ENCODE measurements at regions of chr16 and their contacts with region 1.

Region 1: GRCh38 chr16:9151597-9151996 is 60.2 kb downstream of the HAPSTR1 start:
- DNase-seq: no peak
- ATAC-seq: no peak
- H3K4me3 ChIP-seq: no peak overlapping the region
- H3K27ac ChIP-seq: no peak overlapping the region
- H3K4me1 ChIP-seq: no peaks in the 10 kb centered on the region
- H3K27me3 ChIP-seq: no peaks in the 10 kb centered on the region
- CTCF ChIP-seq: no peak
- EP300 ChIP-seq: no peak
- POLR2A ChIP-seq: no peak
- RAD21 ChIP-seq: no peak

Region 2: DNA sequence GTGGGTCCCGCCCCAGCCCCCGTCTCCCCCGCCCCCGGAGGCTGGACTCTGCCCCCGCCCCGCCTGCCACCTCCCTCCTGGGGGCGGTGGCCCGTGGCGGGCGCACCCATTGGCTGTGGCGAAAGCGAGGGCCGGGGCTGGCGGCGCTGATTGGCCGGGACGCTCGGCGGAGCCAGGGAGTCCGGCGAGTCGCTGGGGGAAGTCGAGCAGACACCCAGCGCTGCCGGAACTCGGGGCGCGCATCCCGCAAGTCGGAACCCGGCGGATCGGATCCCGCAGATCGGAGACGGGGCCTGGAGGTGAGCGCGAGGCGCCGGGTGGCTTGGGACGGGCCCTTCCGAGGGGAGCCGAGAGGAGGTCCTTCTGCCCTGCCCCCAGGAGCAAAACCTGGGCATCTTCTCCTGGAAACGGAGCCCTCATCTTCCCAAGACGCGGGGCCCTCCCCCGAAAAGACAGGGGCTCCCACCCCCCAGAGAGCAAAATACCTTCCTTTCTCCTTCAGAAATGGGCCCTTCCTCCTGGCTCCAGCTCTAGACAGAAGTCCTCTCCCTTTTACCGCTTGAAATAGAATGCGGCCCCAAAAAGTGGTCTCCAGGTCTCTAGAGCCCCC is 477.1 kb before region 1 on chr16 and contains the start of gene ABAT:
- CTCF ChIA-PET with region 1: no interaction called
- POLR2A ChIA-PET with region 1: no interaction called
- RAD21 ChIA-PET with region 1: no interaction called
- SMC1A ChIA-PET with region 1: no interaction called
- in situ Hi-C with region 1: loop called (anchors 5 kb)
- intact Hi-C with region 1: no loop called
- DNase-seq: peak; percentile 33
- ATAC-seq: peak; percentile 100
- H3K4me3 ChIP-seq: peak within 1 kb of the TSS; percentile 86
- H3K27ac ChIP-seq: no peak within 1 kb of the TSS
- H3K4me1 ChIP-seq: peaks cover 5% of the 10 kb centered on the region
- H3K27me3 ChIP-seq: no peaks in the 10 kb centered on the region
- CTCF ChIP-seq: no peak
- EP300 ChIP-seq: no peak
- POLR2A ChIP-seq: peak; percentile 88
- RAD21 ChIP-seq: no peak
- polyA plus RNA-seq, gene ABAT: 1.0 to 1.1 TPM